ENCODE measurements at regions of chr9 and their contacts with region 1.

Region 1: DNA sequence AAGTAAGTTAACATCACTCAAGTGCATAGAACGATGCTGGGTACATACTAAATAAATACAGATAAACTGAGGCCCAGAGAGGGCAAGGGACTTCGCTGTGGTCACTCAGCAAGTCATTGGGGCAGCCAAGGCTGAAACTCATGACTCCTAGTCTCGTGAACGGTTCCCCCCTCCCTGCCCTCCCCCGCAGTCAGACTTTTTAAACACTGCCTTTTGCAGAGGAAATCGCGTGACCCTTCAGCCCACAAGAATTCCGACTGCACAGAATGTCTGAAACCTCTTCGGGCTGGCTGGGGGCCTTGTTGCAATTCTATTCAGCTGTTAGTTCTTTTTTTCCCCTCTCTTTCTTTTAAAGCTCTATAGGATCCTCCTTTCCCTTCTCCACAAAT is 28.1 kb downstream of the NEK6 start:
- DNase-seq: peak; percentile 70
- ATAC-seq: peak; percentile 62
- H3K4me3 ChIP-seq: peak overlapping the region; percentile 54
- H3K27ac ChIP-seq: peak overlapping the region; percentile 97
- H3K4me1 ChIP-seq: peaks cover 72% of the 10 kb centered on the region
- H3K27me3 ChIP-seq: no peaks in the 10 kb centered on the region
- CTCF ChIP-seq: no peak
- EP300 ChIP-seq: peak; percentile 77 to 93
- POLR2A ChIP-seq: no peak
- RAD21 ChIP-seq: peak; percentile 17; the same call in 1 of the 2 replicates

Region 2: GRCh38 chr9:124257844-124258606 is 27.9 kb before region 1 on chr9 and contains the start of gene NEK6:
- CTCF ChIA-PET with region 1: interaction called, 11 read pairs
- POLR2A ChIA-PET with region 1: interaction called, 45 read pairs
- RAD21 ChIA-PET with region 1: interaction called, 74 read pairs
- SMC1A ChIA-PET with region 1: interaction called, 132 read pairs
- in situ Hi-C with region 1: no loop called
- intact Hi-C with region 1: no loop called
- DNase-seq: no peak
- ATAC-seq: peak; percentile 2
- H3K4me3 ChIP-seq: peak within 1 kb of the TSS; percentile 95
- H3K27ac ChIP-seq: peak within 1 kb of the TSS; percentile 88
- H3K4me1 ChIP-seq: peaks cover 35% of the 10 kb centered on the region
- H3K27me3 ChIP-seq: no peaks in the 10 kb centered on the region
- CTCF ChIP-seq: no peak
- EP300 ChIP-seq: no peak
- POLR2A ChIP-seq: peak; percentile 72
- RAD21 ChIP-seq: no peak
- polyA plus RNA-seq, gene NEK6: 31.3 to 33.2 TPM

Region 3: GRCh38 chr9:124267271-124267807 is 18.6 kb before region 1 on chr9:
- CTCF ChIA-PET with region 1: interaction called, 11 read pairs
- POLR2A ChIA-PET with region 1: interaction called, 45 read pairs
- RAD21 ChIA-PET with region 1: interaction called, 74 read pairs
- SMC1A ChIA-PET with region 1: interaction called, 132 read pairs
- in situ Hi-C with region 1: no loop called
- intact Hi-C with region 1: loop called (anchors 1 kb)
- DNase-seq: no peak
- ATAC-seq: peak; percentile 8
- H3K4me3 ChIP-seq: peak overlapping the region; percentile 61; the same call in 1 of the 2 replicates
- H3K27ac ChIP-seq: peak overlapping the region; percentile 7
- H3K4me1 ChIP-seq: peaks cover 44% of the 10 kb centered on the region
- H3K27me3 ChIP-seq: no peaks in the 10 kb centered on the region
- CTCF ChIP-seq: 0 out of 6 replicates have a peak, but pooled peaks of 1 of the 3 experiments have one; percentile 8
- EP300 ChIP-seq: no peak
- POLR2A ChIP-seq: peak; percentile 18
- RAD21 ChIP-seq: no peak

Measured in GM12878 (cell line).